Activated naive CD4-positive, alpha-beta T cell treated with anti-CD3 and anti-CD28 coated beads for 36 hours (primary cell): ENCODE measurements at regions of chr11 and their contacts with region 1.

Region 1: GRCh38 chr11:103091801-103092524 is at the start of gene DCUN1D5:
- DNase-seq: peak; percentile 98
- H3K4me3 Mint-ChIP-seq: peak within 1 kb of the TSS; percentile 80
- H3K27ac Mint-ChIP-seq: peak within 1 kb of the TSS; percentile 81
- H3K4me1 Mint-ChIP-seq: peaks cover 22% of the 10 kb centered on the region
- H3K27me3 Mint-ChIP-seq: peaks cover 2% of the 10 kb centered on the region
- total RNA-seq, gene DCUN1D5: 52.6 to 58.4 TPM

Region 2: DNA sequence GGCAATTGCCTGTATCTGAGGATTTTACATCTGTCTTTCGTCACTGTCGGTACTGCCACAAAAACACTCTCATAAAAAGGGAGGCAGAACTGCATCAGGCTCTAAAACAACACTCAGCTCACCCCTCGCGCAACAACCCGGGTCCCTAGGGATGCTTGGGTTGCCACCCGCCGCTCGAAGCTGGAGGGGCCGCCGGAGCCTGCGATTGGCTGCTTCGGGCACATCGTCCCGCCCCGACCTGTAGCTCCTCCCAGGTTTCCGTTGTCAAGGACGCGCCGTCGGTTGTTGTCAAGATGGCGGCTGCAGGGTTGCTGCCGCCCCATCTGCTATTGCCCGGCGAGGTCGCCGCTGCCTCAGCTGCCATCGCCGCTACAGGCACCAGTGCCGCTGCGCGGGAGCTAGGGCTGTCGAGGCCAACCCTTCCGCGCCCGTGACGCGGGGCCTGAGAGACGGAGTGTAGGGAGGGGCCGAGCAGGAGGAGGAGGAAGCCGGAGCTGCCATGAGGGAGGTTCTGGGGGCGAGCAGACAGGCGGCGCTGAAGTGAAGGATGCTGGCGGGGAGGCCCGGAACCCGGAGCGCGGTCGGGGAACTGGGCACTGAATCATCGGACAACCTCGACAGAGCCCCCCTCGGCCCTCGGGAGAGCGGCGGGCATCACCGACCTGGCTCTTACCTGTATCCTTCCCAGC is 1177.1 kb before region 1 on chr11 and contains the start of gene CEP126:
- CTCF ChIA-PET with region 1: no interaction called
- intact Hi-C with region 1: loop called (anchors 10 kb)
- DNase-seq: peak; percentile 96
- H3K4me3 Mint-ChIP-seq: peak within 1 kb of the TSS; percentile 87
- H3K27ac Mint-ChIP-seq: peak within 1 kb of the TSS; percentile 72
- H3K4me1 Mint-ChIP-seq: peaks cover 19% of the 10 kb centered on the region
- H3K27me3 Mint-ChIP-seq: no peaks in the 10 kb centered on the region
- total RNA-seq, gene CEP126: 1.1 to 1.2 TPM

Region 3: GRCh38 chr11:102994105-102994504 is 97.9 kb before region 1 on chr11:
- CTCF ChIA-PET with region 1: no interaction called
- intact Hi-C with region 1: loop called (anchors 5 kb)
- DNase-seq: no peak
- H3K4me3 Mint-ChIP-seq: no peak overlapping the region
- H3K27ac Mint-ChIP-seq: no peak overlapping the region
- H3K4me1 Mint-ChIP-seq: no peaks in the 10 kb centered on the region
- H3K27me3 Mint-ChIP-seq: peaks cover 22% of the 10 kb centered on the region

Region 4: GRCh38 chr11:103070142-103070541 is 21.8 kb before region 1 on chr11:
- CTCF ChIA-PET with region 1: no interaction called
- intact Hi-C with region 1: loop called (anchors 2 kb)
- DNase-seq: no peak
- H3K4me3 Mint-ChIP-seq: no peak overlapping the region
- H3K27ac Mint-ChIP-seq: peak overlapping the region; percentile 66
- H3K4me1 Mint-ChIP-seq: peaks cover 39% of the 10 kb centered on the region
- H3K27me3 Mint-ChIP-seq: no peaks in the 10 kb centered on the region

Region 5: DNA sequence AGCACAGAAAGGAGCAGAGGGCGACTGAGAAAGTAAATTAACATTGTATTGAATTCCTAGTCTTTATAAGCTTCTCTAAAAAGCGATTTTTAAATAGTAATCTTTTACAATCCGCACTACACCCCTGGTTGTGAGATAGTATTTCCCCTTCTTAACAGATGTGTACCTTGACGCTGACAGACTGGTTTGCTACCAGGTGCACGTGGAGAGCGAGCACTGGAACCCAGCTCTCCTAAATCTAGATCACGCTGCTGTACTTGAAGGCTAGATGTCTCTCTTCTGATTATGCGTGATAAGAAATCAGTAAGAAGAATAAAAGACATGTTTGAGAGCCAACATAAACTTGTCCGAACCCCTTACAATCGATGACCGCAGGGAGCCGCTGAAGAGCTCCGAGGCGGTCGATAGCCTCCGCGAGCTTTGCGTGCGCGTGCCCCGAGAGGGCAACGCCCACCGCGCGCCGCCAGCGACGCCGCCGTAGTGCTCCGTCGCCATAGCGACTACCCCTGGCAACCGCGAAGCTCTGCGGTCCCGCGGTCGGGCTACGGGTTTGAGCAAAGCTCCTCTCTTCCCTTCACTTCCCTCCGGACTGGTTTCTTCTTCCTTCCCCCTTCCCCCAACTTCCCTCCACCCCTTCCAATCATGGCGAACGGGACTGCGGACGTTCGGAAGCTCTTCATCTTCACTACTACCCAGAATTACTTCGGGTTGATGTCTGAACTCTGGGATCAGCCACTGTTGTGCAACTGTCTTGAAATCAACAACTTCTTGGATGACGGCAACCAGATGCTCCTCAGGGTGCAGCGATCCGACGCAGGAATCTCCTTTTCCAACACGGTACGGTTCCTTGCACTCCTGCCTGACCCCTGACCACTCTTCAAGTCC is 17.2 kb after region 1 on chr11 and contains the start of gene DYNC2H1:
- CTCF ChIA-PET with region 1: interaction called, 35 read pairs
- intact Hi-C with region 1: loop called (anchors 1 kb)
- DNase-seq: peak; percentile 90
- H3K4me3 Mint-ChIP-seq: peak within 1 kb of the TSS; percentile 84
- H3K27ac Mint-ChIP-seq: peak within 1 kb of the TSS; percentile 72
- H3K4me1 Mint-ChIP-seq: peaks cover 7% of the 10 kb centered on the region
- H3K27me3 Mint-ChIP-seq: no peaks in the 10 kb centered on the region
- total RNA-seq, gene DYNC2H1: 1.9 to 2.8 TPM